CD8-positive, alpha-beta memory T cell (primary cell): ENCODE measurements at regions of chr16 and their contacts with region 1.

Region 1: DNA sequence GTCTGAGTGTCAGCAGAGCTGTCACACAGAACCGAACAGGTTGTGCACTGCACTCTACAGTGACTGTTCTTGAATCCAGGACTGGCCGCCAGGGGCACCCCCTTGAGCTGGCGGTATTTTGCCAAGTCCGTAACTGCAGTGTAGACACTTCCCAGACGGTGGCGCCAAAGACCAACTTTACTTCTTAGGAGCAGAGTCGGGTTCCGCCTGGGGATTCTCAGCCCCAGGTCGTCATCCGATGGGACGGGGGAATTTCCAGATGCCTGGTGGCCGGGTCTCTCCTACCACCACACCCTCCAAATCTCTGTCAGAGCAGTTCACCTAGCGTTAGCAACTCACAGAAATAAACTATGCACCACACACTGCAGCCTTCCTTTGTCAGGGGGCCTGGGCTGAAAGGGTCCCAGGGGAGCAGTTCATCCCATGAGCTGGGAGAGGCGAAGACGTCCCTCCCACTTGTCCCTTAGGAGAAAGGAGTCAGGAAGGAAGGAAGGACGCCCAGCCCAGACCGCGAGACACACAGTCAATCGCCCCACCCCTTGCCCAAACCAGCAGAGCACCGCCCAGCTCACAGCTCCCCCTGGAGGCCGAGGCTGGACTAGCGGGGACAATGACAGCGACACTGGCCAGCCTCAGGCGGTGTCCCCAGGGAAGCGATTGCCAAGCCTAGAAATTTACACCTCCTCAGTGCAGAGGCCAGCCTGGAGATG is 7.4 kb upstream of the RIPOR1 start:
- DNase-seq: peak; percentile 91 to 98 (median 96)
- H3K4me3 ChIP-seq: peak overlapping the region; percentile 91
- H3K4me3 Mint-ChIP-seq: peak overlapping the region; percentile 90 to 97 (median 93)
- H3K27ac ChIP-seq: peak overlapping the region; percentile 86
- H3K27ac Mint-ChIP-seq: peak overlapping the region; percentile 97 to 100 (median 99)
- H3K4me1 ChIP-seq: peaks cover 11% of the 10 kb centered on the region
- H3K4me1 Mint-ChIP-seq: peaks cover 16 to 18% (median 17%) of the 10 kb centered on the region in 3 donors
- H3K27me3 ChIP-seq: no peaks in the 10 kb centered on the region
- H3K27me3 Mint-ChIP-seq: peaks cover 0 to 4% of the 10 kb centered on the region in 2 donors

Region 2: GRCh38 chr16:67252609-67253497 is 268.4 kb before region 1 on chr16:
- CTCF ChIA-PET with region 1: no interaction called
- POLR2A ChIA-PET with region 1: no interaction called
- DNase-seq: peak in 1 of 5 donors; percentile 22
- H3K4me3 ChIP-seq: no peak overlapping the region
- H3K4me3 Mint-ChIP-seq: peak overlapping the region in 2 of 7 donors; percentile 12 to 61
- H3K27ac ChIP-seq: no peak overlapping the region
- H3K27ac Mint-ChIP-seq: no peak overlapping the region
- H3K4me1 ChIP-seq: peaks cover 17% of the 10 kb centered on the region
- H3K4me1 Mint-ChIP-seq: peaks cover 10 to 22% (median 18%) of the 10 kb centered on the region in 3 donors
- H3K27me3 ChIP-seq: no peaks in the 10 kb centered on the region
- H3K27me3 Mint-ChIP-seq: peaks cover 5 to 10% of the 10 kb centered on the region in 2 donors

Region 3: DNA sequence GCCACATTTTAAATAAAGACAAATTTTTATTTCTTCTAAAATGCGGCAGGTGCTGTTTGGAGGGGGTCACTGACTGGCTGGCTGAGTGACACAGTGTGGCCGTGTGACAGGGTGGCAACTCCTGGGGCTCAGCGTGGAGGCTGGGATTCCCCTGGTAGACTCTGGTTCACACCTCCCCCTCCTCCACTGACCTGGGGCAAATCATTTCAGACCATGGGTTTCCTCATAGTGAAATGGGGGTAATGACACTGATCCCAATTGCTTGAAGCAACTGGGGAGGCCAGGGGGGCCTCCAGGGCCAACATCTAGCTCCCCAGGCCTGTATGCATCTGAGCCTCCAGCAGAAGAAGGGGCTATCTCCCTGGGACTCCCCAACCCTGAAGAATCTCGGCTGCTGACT is 83.7 kb before region 1 on chr16:
- CTCF ChIA-PET with region 1: no interaction called
- POLR2A ChIA-PET with region 1: no interaction called
- DNase-seq: no peak
- H3K4me3 ChIP-seq: no peak overlapping the region
- H3K4me3 Mint-ChIP-seq: no peak overlapping the region
- H3K27ac ChIP-seq: no peak overlapping the region
- H3K27ac Mint-ChIP-seq: peak overlapping the region in 3 of 8 donors; percentile 63 to 89 (median 79)
- H3K4me1 ChIP-seq: no peaks in the 10 kb centered on the region
- H3K4me1 Mint-ChIP-seq: peaks cover 0 to under 1% (median 0%) of the 10 kb centered on the region in 3 donors
- H3K27me3 ChIP-seq: no peaks in the 10 kb centered on the region
- H3K27me3 Mint-ChIP-seq: peaks cover under 1 to 2% of the 10 kb centered on the region in 2 donors

Region 4: DNA sequence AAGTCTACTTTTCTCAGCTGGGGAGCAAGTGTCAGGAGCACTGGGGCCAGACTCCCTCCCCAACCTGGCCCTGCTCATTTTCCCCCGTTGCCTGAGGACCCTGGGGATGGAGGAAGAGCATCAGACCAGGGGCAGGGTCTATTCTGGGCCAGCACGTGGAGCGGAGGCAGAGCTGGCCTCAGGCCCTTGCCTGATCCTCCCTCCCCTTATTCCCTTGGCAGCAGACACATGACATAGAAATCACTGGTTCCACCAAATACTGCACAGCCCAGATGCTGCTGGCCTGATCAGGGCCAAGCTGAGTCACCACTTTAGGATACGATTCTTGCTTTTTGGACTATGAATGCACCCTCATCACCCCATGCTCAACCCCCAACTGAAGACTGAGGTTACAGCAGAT is 22.1 kb before region 1 on chr16:
- CTCF ChIA-PET with region 1: interaction called, 168 read pairs
- POLR2A ChIA-PET with region 1: interaction called, 6 read pairs
- DNase-seq: no peak
- H3K4me3 ChIP-seq: no peak overlapping the region
- H3K4me3 Mint-ChIP-seq: no peak overlapping the region
- H3K27ac ChIP-seq: no peak overlapping the region
- H3K27ac Mint-ChIP-seq: peak overlapping the region in 6 of 8 donors; percentile 50 to 92 (median 72)
- H3K4me1 ChIP-seq: peaks cover 18% of the 10 kb centered on the region
- H3K4me1 Mint-ChIP-seq: peaks cover 12 to 17% (median 15%) of the 10 kb centered on the region in 3 donors
- H3K27me3 ChIP-seq: no peaks in the 10 kb centered on the region
- H3K27me3 Mint-ChIP-seq: no peaks in the 10 kb centered on the region

Region 5: DNA sequence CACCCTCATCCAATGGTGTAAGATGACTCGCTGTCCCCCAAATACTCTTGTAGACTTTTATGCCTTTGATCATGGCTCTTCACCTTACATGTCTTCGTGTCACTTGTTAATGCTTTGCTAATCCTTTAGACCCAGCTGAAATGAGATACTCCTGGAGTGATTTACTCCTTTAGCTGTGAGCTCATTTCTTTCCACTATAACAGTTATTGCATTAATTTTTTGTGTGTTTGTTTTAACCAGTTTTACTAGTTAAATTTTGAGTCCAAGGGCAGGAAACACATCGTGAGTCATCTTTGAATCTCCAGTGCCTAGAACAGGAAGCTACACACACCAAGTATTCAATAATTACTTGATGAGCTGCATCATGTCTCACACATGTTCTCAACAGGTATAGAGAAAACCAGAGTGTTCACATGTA is 34.6 kb after region 1 on chr16:
- CTCF ChIA-PET with region 1: interaction called, 47 read pairs
- POLR2A ChIA-PET with region 1: no interaction called
- DNase-seq: peak in 2 of 5 donors; percentile 30 to 50
- H3K4me3 ChIP-seq: no peak overlapping the region
- H3K4me3 Mint-ChIP-seq: peak overlapping the region; percentile 2 to 79 (median 46)
- H3K27ac ChIP-seq: no peak overlapping the region
- H3K27ac Mint-ChIP-seq: peak overlapping the region; percentile 48 to 93 (median 90)
- H3K4me1 ChIP-seq: peaks cover 46% of the 10 kb centered on the region
- H3K4me1 Mint-ChIP-seq: peaks cover 24 to 57% (median 48%) of the 10 kb centered on the region in 3 donors
- H3K27me3 ChIP-seq: no peaks in the 10 kb centered on the region
- H3K27me3 Mint-ChIP-seq: no peaks in the 10 kb centered on the region

Region 6: GRCh38 chr16:67660564-67661028 is 139.3 kb after region 1 on chr16 and contains the start of gene PARD6A:
- CTCF ChIA-PET with region 1: interaction called, 95 read pairs
- POLR2A ChIA-PET with region 1: interaction called, 3 read pairs
- DNase-seq: peak; percentile 94 to 98 (median 95)
- H3K4me3 ChIP-seq: peak within 1 kb of the TSS; percentile 93
- H3K4me3 Mint-ChIP-seq: peak within 1 kb of the TSS; percentile 93 to 99 (median 94)
- H3K27ac ChIP-seq: peak within 1 kb of the TSS; percentile 98
- H3K27ac Mint-ChIP-seq: peak within 1 kb of the TSS; percentile 94 to 99 (median 96)
- H3K4me1 ChIP-seq: peaks cover 25% of the 10 kb centered on the region
- H3K4me1 Mint-ChIP-seq: peaks cover 14 to 37% (median 17%) of the 10 kb centered on the region in 3 donors
- H3K27me3 ChIP-seq: no peaks in the 10 kb centered on the region
- H3K27me3 Mint-ChIP-seq: peaks cover 0 to 3% of the 10 kb centered on the region in 2 donors
- total RNA-seq, gene PARD6A: 16.7 to 18.3 TPM

Region 7: GRCh38 chr16:67685388-67686112 is 164.3 kb after region 1 on chr16:
- CTCF ChIA-PET with region 1: interaction called, 10 read pairs
- POLR2A ChIA-PET with region 1: no interaction called
- DNase-seq: no peak
- H3K4me3 ChIP-seq: no peak overlapping the region
- H3K4me3 Mint-ChIP-seq: peak overlapping the region in 1 of 7 donors; percentile 24
- H3K27ac ChIP-seq: no peak overlapping the region
- H3K27ac Mint-ChIP-seq: peak overlapping the region in 4 of 8 donors; percentile 23 to 79 (median 50)
- H3K4me1 ChIP-seq: peaks cover 7% of the 10 kb centered on the region
- H3K4me1 Mint-ChIP-seq: peaks cover 0 to 9% (median 2%) of the 10 kb centered on the region in 3 donors
- H3K27me3 ChIP-seq: no peaks in the 10 kb centered on the region
- H3K27me3 Mint-ChIP-seq: no peaks in the 10 kb centered on the region

Region 8: GRCh38 chr16:67928561-67929364 is 407.5 kb after region 1 on chr16:
- CTCF ChIA-PET with region 1: interaction called, 16 read pairs
- POLR2A ChIA-PET with region 1: no interaction called
- DNase-seq: peak; percentile 59 to 81 (median 60)
- H3K4me3 ChIP-seq: no peak overlapping the region
- H3K4me3 Mint-ChIP-seq: no peak overlapping the region
- H3K27ac ChIP-seq: no peak overlapping the region
- H3K27ac Mint-ChIP-seq: peak overlapping the region in 4 of 8 donors; percentile 7 to 79 (median 62)
- H3K4me1 ChIP-seq: no peaks in the 10 kb centered on the region
- H3K4me1 Mint-ChIP-seq: peaks cover 0 to 21% (median 4%) of the 10 kb centered on the region in 3 donors
- H3K27me3 ChIP-seq: no peaks in the 10 kb centered on the region
- H3K27me3 Mint-ChIP-seq: no peaks in the 10 kb centered on the region